Caco-2 (cell line): ENCODE measurements at regions of chr7 and their contacts with region 1.

Region 1: DNA sequence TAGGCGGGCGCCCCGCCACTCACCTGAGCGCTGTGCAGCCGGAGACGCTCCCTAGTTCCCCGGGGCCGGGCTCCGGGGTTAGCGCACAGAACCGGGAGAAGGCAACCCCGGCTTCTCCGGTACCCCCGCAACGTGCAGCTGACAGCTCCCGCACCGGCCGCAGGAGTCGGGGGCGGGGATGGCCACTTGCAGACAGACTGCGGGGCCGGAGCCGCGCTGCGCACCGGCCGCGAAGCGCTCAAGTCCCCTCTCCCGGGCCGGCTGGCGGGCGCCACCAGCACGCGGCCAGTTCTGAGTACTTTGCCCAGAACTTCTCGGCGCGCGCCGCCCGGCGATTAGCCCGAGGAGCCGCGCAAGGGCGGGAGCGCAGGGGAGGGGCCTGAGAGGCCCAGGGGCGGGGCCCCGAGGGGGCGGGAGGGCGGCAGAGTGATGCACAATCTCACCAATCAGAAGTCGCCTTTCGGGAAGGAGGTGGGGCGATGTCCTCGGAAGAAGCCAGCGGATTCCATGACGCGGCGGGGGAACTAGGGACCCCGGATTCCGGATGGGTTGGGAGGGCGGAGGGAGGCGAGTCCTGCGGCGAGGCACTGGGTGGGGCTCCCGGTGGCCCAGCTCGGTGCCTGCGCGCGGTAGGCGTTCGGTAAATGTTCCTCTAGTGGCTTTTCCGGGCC is at the start of gene OSBPL3:
- DNase-seq: peak; percentile 97
- H3K4me3 ChIP-seq: peak within 1 kb of the TSS; percentile 78
- H3K4me3 Mint-ChIP-seq: peak within 1 kb of the TSS; percentile 85
- H3K27ac Mint-ChIP-seq: peak within 1 kb of the TSS; percentile 96
- H3K4me1 ChIP-seq: peaks cover 23% of the 10 kb centered on the region
- H3K4me1 Mint-ChIP-seq: peaks cover 13% of the 10 kb centered on the region
- H3K27me3 ChIP-seq: no peaks in the 10 kb centered on the region
- H3K27me3 Mint-ChIP-seq: no peaks in the 10 kb centered on the region
- CTCF ChIP-seq: no peak
- total RNA-seq, gene OSBPL3: 43.9 and 45.1 TPM in 2 replicates

Region 2: GRCh38 chr7:24896031-24896501 is 83.9 kb before region 1 on chr7:
- CTCF ChIA-PET with region 1: interaction called, 8 read pairs
- POLR2A ChIA-PET with region 1: interaction called, 3 read pairs
- intact Hi-C with region 1: loop called (anchors 1 kb)
- DNase-seq: no peak
- H3K4me3 ChIP-seq: no peak overlapping the region
- H3K4me3 Mint-ChIP-seq: no peak overlapping the region
- H3K27ac Mint-ChIP-seq: no peak overlapping the region
- H3K4me1 ChIP-seq: peaks cover under 1% of the 10 kb centered on the region; the same call in 1 of the 2 replicates
- H3K4me1 Mint-ChIP-seq: no peaks in the 10 kb centered on the region
- H3K27me3 ChIP-seq: no peaks in the 10 kb centered on the region
- H3K27me3 Mint-ChIP-seq: no peaks in the 10 kb centered on the region
- CTCF ChIP-seq: no peak

Region 3: GRCh38 chr7:25028370-25029021 is 48.5 kb after region 1 on chr7:
- CTCF ChIA-PET with region 1: interaction called, 3 read pairs
- POLR2A ChIA-PET with region 1: interaction called, 8 read pairs
- intact Hi-C with region 1: loop called (anchors 1 kb)
- DNase-seq: peak; percentile 46 to 66
- H3K4me3 ChIP-seq: no peak overlapping the region
- H3K4me3 Mint-ChIP-seq: peak overlapping the region; percentile 54
- H3K27ac Mint-ChIP-seq: peak overlapping the region; percentile 92
- H3K4me1 ChIP-seq: peaks cover 60% of the 10 kb centered on the region
- H3K4me1 Mint-ChIP-seq: peaks cover 67% of the 10 kb centered on the region
- H3K27me3 ChIP-seq: no peaks in the 10 kb centered on the region
- H3K27me3 Mint-ChIP-seq: no peaks in the 10 kb centered on the region
- CTCF ChIP-seq: no peak